HCT116 (cell line): ENCODE measurements at regions of chr5 and their contacts with region 1.

Region 1: DNA sequence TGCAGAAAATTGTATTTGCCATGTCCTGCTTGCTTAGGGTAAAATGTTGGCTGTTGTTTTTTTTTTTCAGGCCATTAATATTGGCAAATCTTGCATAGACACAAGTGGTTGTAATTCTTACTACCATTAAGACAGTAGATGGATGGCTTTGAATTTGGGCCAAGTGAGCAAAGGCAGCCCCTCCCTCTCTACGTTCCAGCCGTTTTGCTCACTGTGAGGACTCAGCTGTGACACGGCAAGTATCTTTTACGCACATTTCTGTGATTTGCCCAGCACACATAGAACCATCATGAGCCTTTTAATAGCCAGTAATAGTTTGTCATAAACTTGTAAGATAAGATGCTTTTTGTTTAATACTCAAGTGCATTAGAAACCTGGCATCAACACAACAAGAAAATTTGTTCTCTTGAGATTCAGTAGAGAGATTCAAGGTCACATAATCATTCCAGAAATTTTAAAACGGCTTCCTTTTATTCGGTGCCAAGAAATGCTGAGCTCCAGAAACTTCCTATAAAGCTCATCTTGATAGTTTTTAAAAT is 205.2 kb upstream of the ADCY2 start:
- DNase-seq: no peak
- ATAC-seq: no peak
- H3K4me3 ChIP-seq: no peak overlapping the region
- H3K27ac ChIP-seq: no peak overlapping the region
- H3K4me1 ChIP-seq: no peaks in the 10 kb centered on the region
- H3K27me3 ChIP-seq: no peaks in the 10 kb centered on the region
- CTCF ChIP-seq: no peak
- POLR2A ChIP-seq: no peak
- RAD21 ChIP-seq: no peak

Region 2: GRCh38 chr5:7208938-7209337 is 18.2 kb after region 1 on chr5:
- CTCF ChIA-PET with region 1: no interaction called
- POLR2A ChIA-PET with region 1: no interaction called
- RAD21 ChIA-PET with region 1: no interaction called
- intact Hi-C with region 1: loop called (anchors 1 kb)
- DNase-seq: no peak
- ATAC-seq: no peak
- H3K4me3 ChIP-seq: no peak overlapping the region
- H3K27ac ChIP-seq: no peak overlapping the region
- H3K4me1 ChIP-seq: no peaks in the 10 kb centered on the region
- H3K27me3 ChIP-seq: no peaks in the 10 kb centered on the region
- CTCF ChIP-seq: no peak
- POLR2A ChIP-seq: no peak
- RAD21 ChIP-seq: no peak